ENCODE measurements at regions of chr11 and their contacts with region 1.

Region 1: DNA sequence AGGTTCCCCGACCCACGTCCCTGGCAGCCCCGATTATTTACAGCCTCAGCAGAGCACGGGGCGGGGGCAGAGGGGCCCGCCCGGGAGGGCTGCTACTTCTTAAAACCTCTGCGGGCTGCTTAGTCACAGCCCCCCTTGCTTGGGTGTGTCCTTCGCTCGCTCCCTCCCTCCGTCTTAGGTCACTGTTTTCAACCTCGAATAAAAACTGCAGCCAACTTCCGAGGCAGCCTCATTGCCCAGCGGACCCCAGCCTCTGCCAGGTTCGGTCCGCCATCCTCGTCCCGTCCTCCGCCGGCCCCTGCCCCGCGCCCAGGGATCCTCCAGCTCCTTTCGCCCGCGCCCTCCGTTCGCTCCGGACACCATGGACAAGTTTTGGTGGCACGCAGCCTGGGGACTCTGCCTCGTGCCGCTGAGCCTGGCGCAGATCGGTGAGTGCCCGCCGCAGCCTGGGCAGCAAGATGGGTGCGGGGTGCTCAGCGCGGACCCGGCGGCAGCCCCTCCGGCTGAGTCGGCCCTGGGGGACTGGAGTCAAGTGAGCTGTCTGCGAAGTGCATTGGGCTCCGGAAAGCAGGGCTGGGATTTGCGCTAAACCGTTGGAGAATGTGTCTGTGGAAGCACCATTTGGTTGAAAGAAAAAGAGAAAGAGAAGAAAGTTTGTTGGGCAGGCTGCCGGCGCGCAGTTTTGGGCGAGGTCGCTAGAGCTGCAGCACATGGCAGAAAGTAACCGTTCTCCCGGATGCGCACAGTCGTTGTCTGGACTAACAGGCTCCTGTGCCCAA is at the start of gene CD44:
- DNase-seq: peak; percentile 68
- ATAC-seq: peak; percentile 79
- H3K4me3 Mint-ChIP-seq: peak within 1 kb of the TSS; percentile 97
- H3K27ac Mint-ChIP-seq: peak within 1 kb of the TSS; percentile 98
- H3K4me1 Mint-ChIP-seq: peaks cover 57% of the 10 kb centered on the region
- H3K27me3 Mint-ChIP-seq: no peaks in the 10 kb centered on the region
- CTCF ChIP-seq: no peak
- total RNA-seq, gene CD44: 1,441 and 1,546 TPM in 2 replicates

Region 2: GRCh38 chr11:35013514-35014233 is 125.5 kb before region 1 on chr11:
- CTCF ChIA-PET with region 1: no interaction called
- POLR2A ChIA-PET with region 1: interaction called, 41 read pairs
- intact Hi-C with region 1: loop called (anchors 1 kb)
- DNase-seq: no peak
- ATAC-seq: peak; percentile 47
- H3K4me3 Mint-ChIP-seq: peak overlapping the region; percentile 59
- H3K27ac Mint-ChIP-seq: peak overlapping the region; percentile 90
- H3K4me1 Mint-ChIP-seq: peaks cover 43% of the 10 kb centered on the region
- H3K27me3 Mint-ChIP-seq: no peaks in the 10 kb centered on the region
- CTCF ChIP-seq: no peak

Region 3: DNA sequence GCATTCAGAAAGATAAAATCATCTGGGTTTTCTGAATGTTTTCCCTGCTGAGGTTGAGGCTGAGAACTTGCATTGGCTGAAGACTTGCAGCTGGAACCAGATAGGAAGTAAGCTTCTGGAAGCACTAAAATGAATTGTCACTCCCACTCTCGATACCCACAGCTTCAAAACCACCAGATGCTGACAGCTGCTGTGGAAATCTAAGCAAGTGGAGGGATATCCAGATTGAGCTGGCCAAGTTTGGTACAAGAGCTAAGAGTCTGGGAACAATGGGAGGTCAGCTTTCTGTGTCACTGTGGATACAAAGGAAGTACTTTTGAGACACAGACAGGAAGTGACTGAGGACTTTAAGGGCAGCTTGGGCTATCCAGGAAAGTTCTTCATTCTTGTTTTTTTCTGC is 51.5 kb before region 1 on chr11:
- CTCF ChIA-PET with region 1: no interaction called
- POLR2A ChIA-PET with region 1: interaction called, 145 read pairs
- intact Hi-C with region 1: loop called (anchors 1 kb)
- DNase-seq: no peak
- ATAC-seq: no peak
- H3K4me3 Mint-ChIP-seq: no peak overlapping the region
- H3K27ac Mint-ChIP-seq: peak overlapping the region; percentile 87
- H3K4me1 Mint-ChIP-seq: peaks cover 67% of the 10 kb centered on the region
- H3K27me3 Mint-ChIP-seq: no peaks in the 10 kb centered on the region
- CTCF ChIP-seq: no peak

Region 4: DNA sequence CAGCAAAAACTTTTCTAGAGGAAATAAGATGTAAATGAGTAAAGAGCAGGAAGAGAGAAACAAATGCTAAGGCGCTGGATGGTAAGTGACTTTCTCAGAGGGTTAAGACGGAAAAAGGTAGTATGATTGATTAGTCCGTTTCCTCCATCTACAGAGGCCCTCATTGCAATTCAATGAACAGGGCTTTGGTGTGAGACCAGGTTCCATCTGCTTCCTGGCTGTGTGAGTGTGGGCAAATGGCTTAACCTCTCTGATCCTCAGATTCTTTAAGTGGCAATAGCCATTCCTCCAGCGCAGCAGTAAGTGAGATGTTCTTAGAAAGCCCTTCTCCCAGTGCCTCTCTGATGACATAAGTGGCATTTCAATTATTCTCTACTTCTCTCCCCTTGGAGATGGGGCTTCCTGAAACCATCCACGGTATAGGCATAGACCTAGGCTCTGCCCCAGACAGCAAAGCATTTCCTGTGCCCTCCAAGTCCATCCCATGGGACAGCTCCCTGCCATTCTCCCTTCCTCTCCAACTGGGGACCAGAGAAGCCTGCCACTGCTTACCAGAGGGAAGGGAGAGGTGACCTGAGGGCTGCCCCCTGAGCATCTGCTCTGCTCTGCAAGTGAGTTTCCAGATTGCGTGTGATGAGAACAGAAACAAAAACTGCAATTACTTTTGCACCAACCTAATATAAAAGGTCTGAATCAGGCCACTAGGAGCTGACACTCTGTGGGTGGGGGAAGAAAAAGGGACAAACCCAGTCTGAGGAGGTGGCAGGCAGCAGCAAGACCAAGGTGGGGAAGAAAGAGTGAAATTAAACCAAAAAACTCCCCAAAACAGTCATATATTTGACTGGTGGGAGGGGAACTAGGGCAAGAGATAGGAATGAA is 12.9 kb before region 1 on chr11:
- CTCF ChIA-PET with region 1: interaction called, 6 read pairs
- POLR2A ChIA-PET with region 1: interaction called, 222 read pairs
- intact Hi-C with region 1: loop called (anchors 1 kb)
- DNase-seq: peak; percentile 49
- ATAC-seq: peak; percentile 71
- H3K4me3 Mint-ChIP-seq: peak overlapping the region; percentile 76
- H3K27ac Mint-ChIP-seq: peak overlapping the region; percentile 97
- H3K4me1 Mint-ChIP-seq: peaks cover 85% of the 10 kb centered on the region
- H3K27me3 Mint-ChIP-seq: no peaks in the 10 kb centered on the region
- CTCF ChIP-seq: no peak

Region 5: DNA sequence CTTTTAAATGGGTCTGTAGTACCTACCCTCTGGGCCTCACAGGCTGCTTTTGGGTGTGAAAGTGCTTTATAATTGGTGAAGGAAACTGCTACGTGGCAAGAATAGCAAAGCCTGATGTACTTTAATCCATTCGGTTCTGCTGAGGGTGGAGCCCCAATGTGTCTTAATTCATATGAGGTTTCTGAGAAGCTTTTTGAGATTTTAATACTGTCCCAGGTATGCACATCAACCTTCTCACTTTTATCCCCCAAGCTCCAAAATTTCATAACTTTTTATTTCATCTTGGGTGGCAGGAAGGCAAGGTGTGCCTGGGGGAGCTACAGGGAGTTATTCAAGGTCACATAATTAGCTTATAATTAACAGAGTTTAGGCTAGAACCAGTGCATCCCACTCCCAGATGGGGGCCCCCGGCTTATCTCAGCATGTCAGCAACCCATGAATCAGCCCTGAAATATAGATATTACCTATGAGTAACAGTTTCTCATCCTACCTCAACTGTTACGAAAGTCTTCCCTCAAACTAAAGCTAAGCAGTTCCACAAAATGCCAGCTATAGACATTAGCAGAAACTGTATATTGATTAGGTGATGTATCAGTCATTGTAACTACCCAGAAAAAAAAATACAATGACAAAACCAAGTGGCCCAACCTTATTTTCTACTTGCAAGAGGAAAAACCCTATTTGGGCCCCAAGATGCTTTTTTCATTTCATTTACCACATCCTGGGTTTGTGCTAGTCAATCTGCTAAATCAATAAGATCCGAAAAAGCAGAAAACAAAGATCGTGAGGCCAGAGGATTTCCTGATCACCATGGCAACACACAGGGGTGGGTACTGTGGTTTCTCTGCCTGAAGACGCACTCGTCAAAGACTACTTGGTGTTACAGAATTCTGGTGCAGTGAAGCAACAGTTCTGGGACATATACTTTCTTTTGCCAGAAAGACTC is 26.6 kb after region 1 on chr11:
- CTCF ChIA-PET with region 1: interaction called, 4 read pairs
- POLR2A ChIA-PET with region 1: interaction called, 50 read pairs
- intact Hi-C with region 1: loop called (anchors 1 kb)
- DNase-seq: peak; percentile 55
- ATAC-seq: peak; percentile 68
- H3K4me3 Mint-ChIP-seq: peak overlapping the region; percentile 76
- H3K27ac Mint-ChIP-seq: peak overlapping the region; percentile 91
- H3K4me1 Mint-ChIP-seq: peaks cover 100% of the 10 kb centered on the region
- H3K27me3 Mint-ChIP-seq: no peaks in the 10 kb centered on the region
- CTCF ChIP-seq: no peak

Measured in activated B cell treated with CpG ODN at 0.5 μM for 24 hours (primary cell).